SK-N-SH (cell line): ENCODE measurements at regions of chr14 and their contacts with region 1.

Region 1: GRCh38 chr14:31449971-31450610 is 7.2 kb downstream of the DTD2 start:
- DNase-seq: peak; percentile 65
- H3K4me3 ChIP-seq: no peak overlapping the region
- H3K27ac ChIP-seq: no peak overlapping the region; a peak in 1 of 4 replicates
- H3K4me1 ChIP-seq: peaks cover 6 to 9% of the 10 kb centered on the region in 2 experiments; a peak in 1 of 4 replicates
- H3K27me3 ChIP-seq: no peaks in the 10 kb centered on the region
- CTCF ChIP-seq: peak; percentile 77
- EP300 ChIP-seq: 0 out of 4 replicates have a peak, but pooled peaks of 1 of the 2 experiments have one; percentile 8
- RAD21 ChIP-seq: peak; percentile 82

Region 2: DNA sequence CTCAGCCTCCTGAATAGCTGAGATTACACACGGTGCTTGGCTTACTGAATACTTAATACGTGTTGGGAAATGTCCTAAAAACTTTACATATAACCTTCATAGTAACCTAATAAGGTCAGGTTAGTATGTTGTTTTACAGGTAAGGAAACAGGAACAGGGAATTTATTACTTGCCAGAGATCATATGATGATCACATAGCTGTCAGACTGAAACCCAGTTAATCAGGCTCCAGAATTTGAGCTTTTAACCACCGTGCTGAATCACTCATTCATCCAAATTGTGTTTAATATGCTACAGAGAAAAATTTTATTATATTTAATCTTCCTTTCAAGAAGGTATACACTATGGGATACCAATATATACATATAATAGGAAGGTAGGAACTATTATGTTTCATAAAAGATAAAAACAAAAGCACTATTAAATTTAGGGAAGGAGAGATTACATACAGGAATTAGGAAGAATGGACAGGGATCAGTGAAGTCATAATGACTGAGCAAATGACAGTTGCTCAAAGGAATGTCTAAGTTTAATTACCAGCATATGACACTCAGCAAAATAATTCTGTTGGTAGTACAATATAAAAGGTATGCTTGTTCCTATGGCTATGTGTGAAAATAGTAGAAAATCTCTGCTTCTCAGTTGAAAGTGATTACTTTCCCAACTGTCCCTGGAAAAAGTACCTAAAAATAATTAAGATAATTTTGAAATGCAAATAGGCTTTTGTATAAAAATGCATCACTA is 89.0 kb before region 1 on chr14:
- CTCF ChIA-PET with region 1: interaction called, 12 read pairs
- POLR2A ChIA-PET with region 1: no interaction called
- DNase-seq: no peak
- H3K4me3 ChIP-seq: no peak overlapping the region
- H3K27ac ChIP-seq: peak overlapping the region in 1 of 2 experiments; percentile 71; a peak in 2 of 4 replicates
- H3K4me1 ChIP-seq: peaks cover 0 to 14% of the 10 kb centered on the region in 2 experiments; a peak in 1 of 4 replicates
- H3K27me3 ChIP-seq: no peaks in the 10 kb centered on the region
- CTCF ChIP-seq: no peak
- EP300 ChIP-seq: no peak
- RAD21 ChIP-seq: no peak

Region 3: DNA sequence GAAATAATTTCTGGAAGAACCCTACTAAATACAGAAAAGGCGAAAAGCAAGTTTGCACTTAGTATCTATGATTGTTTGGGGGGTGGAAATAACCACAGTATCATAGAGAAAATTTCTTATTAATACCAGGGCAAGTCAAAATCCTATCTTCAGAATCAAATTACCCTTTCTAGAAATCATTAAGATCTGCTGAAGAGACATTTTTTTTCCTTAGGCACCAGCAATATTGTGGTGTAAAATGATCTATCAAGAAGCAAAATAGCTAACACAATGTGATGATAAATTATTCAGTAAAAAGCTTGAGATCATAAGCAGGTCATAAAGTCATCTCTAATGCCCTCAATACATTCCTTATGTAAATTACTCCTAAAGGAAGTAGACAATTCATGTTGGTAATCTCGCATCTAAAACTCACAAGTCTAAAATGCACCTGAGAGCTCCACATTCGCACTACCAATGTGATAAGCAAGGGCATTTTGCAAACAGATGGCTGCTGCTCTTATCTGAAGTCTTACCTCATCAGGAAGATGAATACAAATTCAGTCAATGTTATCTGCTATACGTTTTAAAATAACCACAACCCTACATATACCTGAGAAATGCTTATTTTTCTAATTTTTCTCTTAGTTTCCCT is 44.4 kb before region 1 on chr14:
- CTCF ChIA-PET with region 1: interaction called, 10 read pairs
- POLR2A ChIA-PET with region 1: no interaction called
- DNase-seq: no peak
- H3K4me3 ChIP-seq: no peak overlapping the region
- H3K27ac ChIP-seq: peak overlapping the region in 1 of 2 experiments; percentile 31; a peak in 1 of 4 replicates
- H3K4me1 ChIP-seq: peaks cover 5 to 7% of the 10 kb centered on the region in 2 experiments; a peak in 3 of 4 replicates
- H3K27me3 ChIP-seq: no peaks in the 10 kb centered on the region
- CTCF ChIP-seq: no peak
- EP300 ChIP-seq: no peak
- RAD21 ChIP-seq: no peak

Region 4: GRCh38 chr14:31429791-31430190 is 20.3 kb before region 1 on chr14:
- CTCF ChIA-PET with region 1: interaction called, 10 read pairs
- POLR2A ChIA-PET with region 1: no interaction called
- DNase-seq: no peak
- H3K4me3 ChIP-seq: no peak overlapping the region
- H3K27ac ChIP-seq: no peak overlapping the region
- H3K4me1 ChIP-seq: peaks cover 0 to 6% of the 10 kb centered on the region in 2 experiments; a peak in 2 of 4 replicates
- H3K27me3 ChIP-seq: no peaks in the 10 kb centered on the region
- CTCF ChIP-seq: no peak
- EP300 ChIP-seq: no peak
- RAD21 ChIP-seq: no peak

Region 5: GRCh38 chr14:31435276-31435675 is 14.8 kb before region 1 on chr14:
- CTCF ChIA-PET with region 1: interaction called, 10 read pairs
- POLR2A ChIA-PET with region 1: no interaction called
- DNase-seq: no peak
- H3K4me3 ChIP-seq: no peak overlapping the region
- H3K27ac ChIP-seq: peak overlapping the region in 1 of 2 experiments; percentile 38; a peak in 1 of 4 replicates
- H3K4me1 ChIP-seq: no peaks in the 10 kb centered on the region
- H3K27me3 ChIP-seq: no peaks in the 10 kb centered on the region
- CTCF ChIP-seq: no peak
- EP300 ChIP-seq: 0 out of 4 replicates have a peak, but pooled peaks of 1 of the 2 experiments have one; percentile 25
- RAD21 ChIP-seq: no peak

Region 6: DNA sequence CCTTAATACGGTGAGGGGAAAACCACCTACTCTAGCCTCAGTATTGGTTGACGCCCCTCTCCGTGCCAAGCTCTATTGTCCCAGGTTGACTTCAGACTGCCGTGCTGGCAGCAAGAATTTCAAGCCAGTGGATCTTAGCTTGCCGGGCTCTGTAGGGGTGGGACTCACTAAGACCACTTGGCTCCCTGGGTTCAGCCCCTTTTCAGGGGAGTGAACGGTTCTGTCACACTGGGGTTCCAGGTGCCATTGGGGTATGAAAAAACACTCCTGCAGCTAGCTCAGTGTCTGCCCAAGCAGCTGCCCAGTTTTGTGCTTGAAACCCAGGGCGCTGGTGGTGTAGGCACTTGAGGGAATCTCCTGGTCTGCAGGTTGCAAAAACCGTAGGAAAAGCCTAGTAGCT is 218.3 kb after region 1 on chr14:
- CTCF ChIA-PET with region 1: no interaction called
- POLR2A ChIA-PET with region 1: no interaction called
- DNase-seq: no peak
- H3K4me3 ChIP-seq: no peak overlapping the region
- H3K27ac ChIP-seq: no peak overlapping the region
- H3K4me1 ChIP-seq: no peaks in the 10 kb centered on the region; a peak in 1 of 4 replicates
- H3K27me3 ChIP-seq: no peaks in the 10 kb centered on the region
- CTCF ChIP-seq: no peak
- EP300 ChIP-seq: no peak
- RAD21 ChIP-seq: no peak